K562 (cell line): ENCODE measurements at regions of chr1 and their contacts with region 1.

Region 1: GRCh38 chr1:51878616-51879336 is at the start of gene NRDC:
- DNase-seq: peak; percentile 99 to 100 (median 100)
- ATAC-seq: peak; percentile 83
- H3K4me3 ChIP-seq: peak within 1 kb of the TSS; percentile 78
- H3K27ac ChIP-seq: peak within 1 kb of the TSS; percentile 98
- H3K4me1 ChIP-seq: peaks cover 4 to 14% of the 10 kb centered on the region in 2 experiments; a peak in 4 of 5 replicates
- H3K27me3 ChIP-seq: no peaks in the 10 kb centered on the region
- CTCF ChIP-seq: 0 out of 6 replicates have a peak, but pooled peaks of 1 of the 3 experiments have one; percentile 7
- EP300 ChIP-seq: peak; percentile 47
- POLR2A ChIP-seq: peak; percentile 94
- RAD21 ChIP-seq: no peak
- polyA plus RNA-seq, gene NRDC: 135 to 149 TPM

Region 2: GRCh38 chr1:51622455-51622913 is 256.3 kb before region 1 on chr1:
- CTCF ChIA-PET with region 1: no interaction called
- POLR2A ChIA-PET with region 1: no interaction called
- in situ Hi-C with region 1: no loop called
- intact Hi-C with region 1: loop called (anchors 5 kb)
- DNase-seq: peak; percentile 70 to 98 (median 79)
- ATAC-seq: peak; percentile 81
- H3K4me3 ChIP-seq: no peak overlapping the region
- H3K27ac ChIP-seq: peak overlapping the region; percentile 69
- H3K4me1 ChIP-seq: peaks cover 22 to 53% of the 10 kb centered on the region in 2 experiments
- H3K27me3 ChIP-seq: no peaks in the 10 kb centered on the region
- CTCF ChIP-seq: no peak
- EP300 ChIP-seq: peak; percentile 92
- POLR2A ChIP-seq: peak; percentile 38; the same call in 1 of the 2 replicates
- RAD21 ChIP-seq: no peak

Region 3: DNA sequence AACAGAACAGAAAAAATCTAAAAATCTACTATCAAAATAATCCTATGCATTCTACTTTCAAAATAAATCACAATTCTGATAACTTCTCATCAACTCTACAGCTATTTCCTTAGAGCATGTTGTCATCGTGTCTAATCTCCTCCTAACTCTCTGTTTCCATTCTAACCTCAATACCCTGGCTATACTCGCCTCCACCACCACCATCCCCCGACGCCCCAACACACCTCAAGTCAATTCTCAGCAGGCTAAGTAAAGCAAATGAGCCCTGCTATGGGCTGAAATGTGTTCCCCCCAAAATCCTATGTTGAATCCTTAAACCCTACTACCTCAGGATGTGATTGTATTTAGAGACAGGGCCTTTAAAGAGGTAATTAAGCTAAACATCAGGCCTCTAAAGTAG is 34.8 kb before region 1 on chr1:
- CTCF ChIA-PET with region 1: no interaction called
- POLR2A ChIA-PET with region 1: interaction called, 12 read pairs
- in situ Hi-C with region 1: no loop called
- intact Hi-C with region 1: loop called (anchors 5 kb)
- DNase-seq: peak in 2 of 4 experiments; percentile 35
- ATAC-seq: peak; percentile 83
- H3K4me3 ChIP-seq: no peak overlapping the region
- H3K27ac ChIP-seq: 0 out of 3 replicates have a peak overlapping the region, but pooled peaks have one; percentile 3
- H3K4me1 ChIP-seq: peaks cover 2 to 8% of the 10 kb centered on the region in 2 experiments; a peak in 2 of 5 replicates
- H3K27me3 ChIP-seq: no peaks in the 10 kb centered on the region
- CTCF ChIP-seq: no peak
- EP300 ChIP-seq: no peak
- POLR2A ChIP-seq: no peak
- RAD21 ChIP-seq: no peak

Region 4: GRCh38 chr1:51863384-51863783 is 15.4 kb before region 1 on chr1:
- CTCF ChIA-PET with region 1: no interaction called
- POLR2A ChIA-PET with region 1: interaction called, 47 read pairs
- in situ Hi-C with region 1: no loop called
- intact Hi-C with region 1: no loop called
- DNase-seq: no peak
- ATAC-seq: no peak
- H3K4me3 ChIP-seq: no peak overlapping the region
- H3K27ac ChIP-seq: no peak overlapping the region
- H3K4me1 ChIP-seq: peaks cover 19 to 20% of the 10 kb centered on the region in 2 experiments; a peak in 4 of 5 replicates
- H3K27me3 ChIP-seq: no peaks in the 10 kb centered on the region
- CTCF ChIP-seq: no peak
- EP300 ChIP-seq: no peak
- POLR2A ChIP-seq: no peak
- RAD21 ChIP-seq: no peak